ENCODE measurements at regions of chr10 and their contacts with region 1.

Region 1: GRCh38 chr10:48551861-48552591 is 52.8 kb downstream of the ARHGAP22 start:
- DNase-seq: peak in 3 of 5 donors; percentile 48 to 58 (median 55)
- H3K4me3 ChIP-seq: no peak overlapping the region
- H3K27ac ChIP-seq: no peak overlapping the region
- H3K4me1 ChIP-seq: no peaks in the 10 kb centered on the region
- H3K27me3 ChIP-seq: no peaks in the 10 kb centered on the region
- CTCF ChIP-seq: peak; percentile 56

Region 2: GRCh38 chr10:48656241-48656913 is 104.4 kb after region 1 on chr10:
- intact Hi-C with region 1: loop called (anchors 5 kb)
- DNase-seq: peak; percentile 92 to 96 (median 95)
- H3K4me3 ChIP-seq: peak overlapping the region; percentile 12 to 63 (median 24)
- H3K27ac ChIP-seq: no peak overlapping the region
- H3K4me1 ChIP-seq: peaks cover 0 to 8% (median 4%) of the 10 kb centered on the region in 3 donors
- H3K27me3 ChIP-seq: no peaks in the 10 kb centered on the region
- CTCF ChIP-seq: peak; percentile 99